ENCODE measurements at regions of chr5 and their contacts with region 1.

Region 1: DNA sequence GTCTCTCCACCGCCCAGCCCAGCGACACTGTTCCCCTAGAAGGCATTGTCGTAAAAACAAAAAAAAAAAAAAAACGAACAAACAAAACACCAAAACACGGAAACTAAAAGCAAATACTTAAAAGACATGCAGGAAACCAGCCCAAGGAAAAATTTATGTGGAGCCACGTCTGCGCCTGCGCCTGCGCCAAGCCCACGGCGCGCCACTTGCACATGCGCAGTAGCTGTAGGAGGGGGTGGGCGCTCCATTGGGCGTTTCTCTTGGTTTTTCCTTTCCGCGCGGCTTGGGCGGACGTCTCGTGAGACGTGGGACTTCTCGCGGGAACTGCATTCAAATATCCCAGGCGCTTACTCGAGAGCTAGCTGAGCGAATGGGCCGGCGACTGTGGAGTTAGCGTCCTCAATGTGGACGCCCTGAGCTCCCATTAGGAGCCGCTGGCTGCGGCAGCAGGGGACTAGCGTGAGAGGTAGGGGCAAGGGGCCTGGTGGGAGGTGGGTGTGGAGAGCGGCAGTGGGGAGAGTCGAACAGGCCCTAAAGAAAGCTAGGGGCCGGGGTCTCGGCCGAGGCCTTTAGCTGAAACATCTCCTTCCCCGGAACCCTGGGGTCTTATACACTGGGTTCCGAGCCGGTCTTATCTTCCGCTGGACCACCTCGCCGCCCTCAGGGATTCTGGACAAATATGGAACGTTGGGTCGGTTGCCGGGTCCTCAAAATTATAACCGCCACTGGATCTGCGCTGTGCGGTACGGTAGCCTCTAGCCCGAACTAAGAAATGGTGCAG is at the start of gene SPDL1:
- DNase-seq: peak; percentile 96 to 98
- ATAC-seq: peak; percentile 98
- H3K4me3 ChIP-seq: peak within 1 kb of the TSS; percentile 58 to 64
- H3K27ac ChIP-seq: no peak within 1 kb of the TSS
- H3K4me1 ChIP-seq: peaks cover 0 to 4% of the 10 kb centered on the region in 2 donors
- H3K27me3 ChIP-seq: no peaks in the 10 kb centered on the region
- total RNA-seq, gene SPDL1: 5.4 to 6.4 TPM

Region 2: GRCh38 chr5:168579488-168580226 is 1004.0 kb before region 1 on chr5:
- intact Hi-C with region 1: loop called in 1 of 2 experiments (anchors 2 kb)
- DNase-seq: peak; percentile 99
- ATAC-seq: peak; percentile 100
- H3K4me3 ChIP-seq: peak overlapping the region; percentile 31 to 86
- H3K27ac ChIP-seq: peak overlapping the region; percentile 52 to 72
- H3K4me1 ChIP-seq: no peaks in the 10 kb centered on the region
- H3K27me3 ChIP-seq: no peaks in the 10 kb centered on the region

Region 3: GRCh38 chr5:168676501-168676900 is 907.1 kb before region 1 on chr5:
- intact Hi-C with region 1: loop called (anchors 2 to 10 kb)
- DNase-seq: no peak
- ATAC-seq: no peak
- H3K4me3 ChIP-seq: no peak overlapping the region
- H3K27ac ChIP-seq: no peak overlapping the region
- H3K4me1 ChIP-seq: no peaks in the 10 kb centered on the region
- H3K27me3 ChIP-seq: no peaks in the 10 kb centered on the region

Region 4: DNA sequence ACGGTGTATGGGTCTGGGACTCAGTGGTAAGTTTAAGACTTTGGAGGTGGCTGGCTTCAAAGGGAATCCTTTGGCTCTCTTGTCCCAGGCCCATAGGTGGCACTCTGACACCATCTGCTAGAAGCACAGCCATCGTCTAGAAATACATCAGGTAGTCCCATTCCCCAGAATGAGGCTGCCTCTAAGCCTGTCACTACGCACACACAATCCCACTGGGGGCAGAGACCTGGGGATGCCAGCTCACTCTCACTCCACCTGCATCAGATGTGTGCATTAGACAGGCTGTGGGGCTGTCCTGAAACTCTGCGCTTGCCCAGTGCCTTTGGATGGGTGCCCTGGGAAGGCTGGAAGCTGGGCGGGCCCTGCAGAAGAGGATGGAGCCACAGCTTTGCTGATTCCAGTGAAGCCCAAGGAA is 877.0 kb before region 1 on chr5:
- intact Hi-C with region 1: loop called in 1 of 2 experiments (anchors 10 kb)
- DNase-seq: peak in 1 of 2 donors; percentile 78
- ATAC-seq: peak; percentile 71
- H3K4me3 ChIP-seq: no peak overlapping the region
- H3K27ac ChIP-seq: no peak overlapping the region
- H3K4me1 ChIP-seq: no peaks in the 10 kb centered on the region
- H3K27me3 ChIP-seq: no peaks in the 10 kb centered on the region

Region 5: GRCh38 chr5:168987543-168988300 is 595.9 kb before region 1 on chr5:
- intact Hi-C with region 1: loop called (anchors 2 to 5 kb)
- DNase-seq: peak; percentile 80 to 89
- ATAC-seq: peak; percentile 68
- H3K4me3 ChIP-seq: no peak overlapping the region
- H3K27ac ChIP-seq: no peak overlapping the region
- H3K4me1 ChIP-seq: no peaks in the 10 kb centered on the region
- H3K27me3 ChIP-seq: no peaks in the 10 kb centered on the region

Region 6: GRCh38 chr5:169521366-169521983 is 62.1 kb before region 1 on chr5:
- intact Hi-C with region 1: no loop called
- DNase-seq: peak in 1 of 2 donors; percentile 79
- ATAC-seq: no peak
- H3K4me3 ChIP-seq: no peak overlapping the region
- H3K27ac ChIP-seq: no peak overlapping the region
- H3K4me1 ChIP-seq: no peaks in the 10 kb centered on the region
- H3K27me3 ChIP-seq: no peaks in the 10 kb centered on the region

Region 7: GRCh38 chr5:169602535-169602934 is 18.9 kb after region 1 on chr5:
- intact Hi-C with region 1: no loop called
- DNase-seq: no peak
- ATAC-seq: no peak
- H3K4me3 ChIP-seq: no peak overlapping the region
- H3K27ac ChIP-seq: no peak overlapping the region
- H3K4me1 ChIP-seq: no peaks in the 10 kb centered on the region
- H3K27me3 ChIP-seq: no peaks in the 10 kb centered on the region

Region 8: GRCh38 chr5:169656125-169656901 is 72.7 kb after region 1 on chr5:
- intact Hi-C with region 1: no loop called
- DNase-seq: no peak
- ATAC-seq: no peak
- H3K4me3 ChIP-seq: no peak overlapping the region
- H3K27ac ChIP-seq: no peak overlapping the region
- H3K4me1 ChIP-seq: peaks cover 0 to 1% of the 10 kb centered on the region in 2 donors
- H3K27me3 ChIP-seq: no peaks in the 10 kb centered on the region

Region 9: DNA sequence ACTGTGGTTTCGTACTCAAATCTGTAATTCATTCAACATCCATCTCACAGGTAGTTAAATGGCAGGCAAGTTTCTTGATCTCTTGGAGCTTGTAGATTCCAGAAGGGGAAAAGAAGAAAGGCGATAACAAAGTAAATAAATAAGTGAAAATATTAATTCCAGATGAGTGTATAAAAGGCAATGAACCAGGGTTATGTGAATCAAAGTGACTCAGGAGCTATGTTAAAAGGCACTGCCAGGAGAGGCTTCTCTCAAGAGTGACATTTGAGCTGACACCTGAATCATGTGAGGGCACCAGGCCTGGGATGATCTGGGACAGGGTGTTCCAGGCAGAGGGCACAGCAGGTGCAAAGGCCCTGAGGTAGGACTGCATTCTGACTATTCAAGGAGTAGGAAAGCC is 98.4 kb after region 1 on chr5:
- intact Hi-C with region 1: no loop called
- DNase-seq: no peak
- ATAC-seq: no peak
- H3K4me3 ChIP-seq: no peak overlapping the region
- H3K27ac ChIP-seq: no peak overlapping the region
- H3K4me1 ChIP-seq: no peaks in the 10 kb centered on the region
- H3K27me3 ChIP-seq: no peaks in the 10 kb centered on the region